ENCODE measurements at regions of chr22 and their contacts with region 1.

Region 1: GRCh38 chr22:38843201-38843715 is 570 bp downstream of the NPTXR start:
- DNase-seq: peak in 13 of 14 experiments; percentile 23 to 87 (median 59)
- ATAC-seq: peak; percentile 88
- H3K4me3 ChIP-seq: no peak overlapping the region
- H3K4me3 Mint-ChIP-seq: no peak overlapping the region
- H3K27ac ChIP-seq: no peak overlapping the region
- H3K27ac Mint-ChIP-seq: no peak overlapping the region
- H3K4me1 ChIP-seq: peaks cover 24% of the 10 kb centered on the region
- H3K4me1 Mint-ChIP-seq: peaks cover 30% of the 10 kb centered on the region
- H3K27me3 ChIP-seq: peaks cover 5 to 12% of the 10 kb centered on the region in 2 experiments
- H3K27me3 Mint-ChIP-seq: peaks cover 21% of the 10 kb centered on the region
- CTCF ChIP-seq: no peak

Region 2: DNA sequence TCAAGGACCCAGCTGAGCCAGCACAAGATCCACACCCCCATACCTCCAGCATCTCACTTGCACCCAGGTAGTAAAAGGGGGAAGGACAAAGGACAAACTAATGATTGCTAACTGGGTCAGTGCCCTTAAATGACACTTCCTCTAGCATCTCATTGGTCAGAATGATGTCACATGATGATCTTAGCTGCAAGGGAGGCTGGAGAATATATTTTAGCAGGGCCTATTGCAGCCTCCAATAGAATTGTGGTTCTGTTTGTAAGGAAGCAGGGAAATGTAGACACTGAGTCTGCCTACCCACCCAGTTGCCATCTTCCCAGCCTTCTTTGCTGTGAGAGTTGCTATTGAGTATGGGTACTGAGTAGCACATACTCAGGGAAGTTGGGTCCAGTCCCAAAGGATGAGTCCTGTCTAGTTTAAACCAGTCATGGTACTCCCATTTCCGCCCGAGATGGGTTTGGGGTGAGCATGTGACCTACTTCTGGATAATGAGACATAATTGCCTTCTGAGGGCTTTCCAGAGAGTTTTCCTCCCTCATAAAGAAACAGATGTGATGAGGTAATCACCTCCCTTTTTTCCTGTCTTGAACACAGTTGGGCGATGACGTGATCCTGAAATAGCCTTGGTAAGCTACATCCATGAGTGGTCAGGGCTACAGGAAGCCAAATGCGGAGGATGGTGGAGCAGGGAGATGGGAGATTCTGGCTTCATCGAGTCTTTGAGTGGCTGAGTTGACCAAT is 43.8 kb before region 1 on chr22:
- CTCF ChIA-PET with region 1: no interaction called
- POLR2A ChIA-PET with region 1: interaction called, 8 read pairs
- intact Hi-C with region 1: loop called in 1 of 2 experiments (anchors 2 kb)
- DNase-seq: no peak
- ATAC-seq: no peak
- H3K4me3 ChIP-seq: no peak overlapping the region
- H3K4me3 Mint-ChIP-seq: no peak overlapping the region
- H3K27ac ChIP-seq: no peak overlapping the region
- H3K27ac Mint-ChIP-seq: no peak overlapping the region
- H3K4me1 ChIP-seq: peaks cover 13% of the 10 kb centered on the region
- H3K4me1 Mint-ChIP-seq: peaks cover 39% of the 10 kb centered on the region
- H3K27me3 ChIP-seq: peaks cover 2 to 7% of the 10 kb centered on the region in 2 experiments
- H3K27me3 Mint-ChIP-seq: peaks cover 4% of the 10 kb centered on the region
- CTCF ChIP-seq: no peak